ENCODE measurements at regions of chr2 and their contacts with region 1.

Region 1: GRCh38 chr2:74951211-74951754 is 7.2 kb upstream of the POLE4 start:
- DNase-seq: no peak
- ATAC-seq: no peak
- H3K4me3 ChIP-seq: no peak overlapping the region
- H3K4me3 Mint-ChIP-seq: no peak overlapping the region
- H3K27ac ChIP-seq: no peak overlapping the region
- H3K27ac Mint-ChIP-seq: no peak overlapping the region
- H3K4me1 ChIP-seq: peaks cover 3% of the 10 kb centered on the region
- H3K4me1 Mint-ChIP-seq: peaks cover 17% of the 10 kb centered on the region
- H3K27me3 ChIP-seq: peaks cover 0 to 5% of the 10 kb centered on the region in 2 experiments
- H3K27me3 Mint-ChIP-seq: no peaks in the 10 kb centered on the region
- CTCF ChIP-seq: no peak

Region 2: DNA sequence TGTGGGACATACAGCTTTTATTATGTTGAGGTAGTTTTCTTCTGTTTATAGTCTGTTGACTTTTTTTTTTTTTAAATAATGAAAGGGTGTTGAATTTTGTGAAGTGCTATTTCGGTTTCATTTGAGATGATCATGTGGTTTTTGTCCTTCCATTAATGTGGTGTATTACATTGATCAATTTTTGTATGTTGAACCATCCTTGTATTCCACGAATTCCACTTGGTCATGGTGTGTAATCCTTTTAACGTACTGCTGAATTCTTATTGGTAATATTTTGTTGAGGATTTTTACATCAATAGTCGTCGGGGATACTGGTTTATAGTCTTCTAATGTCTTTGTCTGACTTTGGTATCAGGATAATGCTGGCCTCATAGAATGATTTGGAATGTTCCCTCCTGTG is 1546.9 kb before region 1 on chr2:
- CTCF ChIA-PET with region 1: no interaction called
- POLR2A ChIA-PET with region 1: no interaction called
- intact Hi-C with region 1: loop called in 1 of 2 experiments (anchors 5 kb)
- DNase-seq: no peak
- ATAC-seq: no peak
- H3K4me3 ChIP-seq: no peak overlapping the region
- H3K4me3 Mint-ChIP-seq: no peak overlapping the region
- H3K27ac ChIP-seq: no peak overlapping the region
- H3K27ac Mint-ChIP-seq: no peak overlapping the region
- H3K4me1 ChIP-seq: no peaks in the 10 kb centered on the region
- H3K4me1 Mint-ChIP-seq: peaks cover 20% of the 10 kb centered on the region
- H3K27me3 ChIP-seq: no peaks in the 10 kb centered on the region
- H3K27me3 Mint-ChIP-seq: no peaks in the 10 kb centered on the region
- CTCF ChIP-seq: no peak

Region 3: DNA sequence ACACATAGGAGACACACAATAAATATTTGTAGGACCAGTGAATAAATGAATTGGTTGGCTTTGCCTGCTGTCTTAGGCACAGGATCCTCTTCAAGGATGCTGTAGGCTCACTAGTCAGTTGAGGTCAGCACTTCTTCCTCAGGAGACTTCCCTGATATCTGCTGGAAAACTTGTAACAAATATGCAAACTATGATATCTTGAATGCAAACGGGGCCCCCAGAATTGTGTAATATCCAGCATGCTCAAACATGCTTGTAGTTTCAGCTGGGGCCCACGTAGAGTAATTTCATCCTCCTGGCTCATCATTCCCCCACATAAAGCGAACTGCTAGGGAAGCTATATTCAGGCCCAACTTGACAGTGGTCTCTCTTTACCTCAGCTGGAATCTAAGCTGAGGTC is 50.7 kb after region 1 on chr2:
- CTCF ChIA-PET with region 1: no interaction called
- POLR2A ChIA-PET with region 1: no interaction called
- intact Hi-C with region 1: no loop called
- DNase-seq: no peak
- ATAC-seq: no peak
- H3K4me3 ChIP-seq: no peak overlapping the region
- H3K4me3 Mint-ChIP-seq: no peak overlapping the region
- H3K27ac ChIP-seq: no peak overlapping the region
- H3K27ac Mint-ChIP-seq: no peak overlapping the region
- H3K4me1 ChIP-seq: no peaks in the 10 kb centered on the region
- H3K4me1 Mint-ChIP-seq: no peaks in the 10 kb centered on the region
- H3K27me3 ChIP-seq: no peaks in the 10 kb centered on the region
- H3K27me3 Mint-ChIP-seq: no peaks in the 10 kb centered on the region
- CTCF ChIP-seq: no peak

Region 4: GRCh38 chr2:75108937-75109482 is 157.7 kb after region 1 on chr2:
- CTCF ChIA-PET with region 1: no interaction called
- POLR2A ChIA-PET with region 1: no interaction called
- intact Hi-C with region 1: no loop called
- DNase-seq: no peak
- ATAC-seq: no peak
- H3K4me3 ChIP-seq: no peak overlapping the region
- H3K4me3 Mint-ChIP-seq: no peak overlapping the region
- H3K27ac ChIP-seq: no peak overlapping the region
- H3K27ac Mint-ChIP-seq: no peak overlapping the region
- H3K4me1 ChIP-seq: no peaks in the 10 kb centered on the region
- H3K4me1 Mint-ChIP-seq: no peaks in the 10 kb centered on the region
- H3K27me3 ChIP-seq: no peaks in the 10 kb centered on the region
- H3K27me3 Mint-ChIP-seq: no peaks in the 10 kb centered on the region
- CTCF ChIP-seq: no peak